ENCODE measurements at regions of chr6 and their contacts with region 1.

Region 1: GRCh38 chr6:144696610-144697368 is 411.7 kb downstream of the UTRN start:
- DNase-seq: no peak
- ATAC-seq: no peak
- H3K4me3 ChIP-seq: no peak overlapping the region
- H3K4me3 Mint-ChIP-seq: no peak overlapping the region
- H3K27ac ChIP-seq: no peak overlapping the region
- H3K27ac Mint-ChIP-seq: peak overlapping the region; percentile 1
- H3K4me1 ChIP-seq: peaks cover 11% of the 10 kb centered on the region
- H3K4me1 Mint-ChIP-seq: peaks cover 38% of the 10 kb centered on the region
- H3K27me3 ChIP-seq: no peaks in the 10 kb centered on the region
- H3K27me3 Mint-ChIP-seq: no peaks in the 10 kb centered on the region
- CTCF ChIP-seq: no peak

Region 2: DNA sequence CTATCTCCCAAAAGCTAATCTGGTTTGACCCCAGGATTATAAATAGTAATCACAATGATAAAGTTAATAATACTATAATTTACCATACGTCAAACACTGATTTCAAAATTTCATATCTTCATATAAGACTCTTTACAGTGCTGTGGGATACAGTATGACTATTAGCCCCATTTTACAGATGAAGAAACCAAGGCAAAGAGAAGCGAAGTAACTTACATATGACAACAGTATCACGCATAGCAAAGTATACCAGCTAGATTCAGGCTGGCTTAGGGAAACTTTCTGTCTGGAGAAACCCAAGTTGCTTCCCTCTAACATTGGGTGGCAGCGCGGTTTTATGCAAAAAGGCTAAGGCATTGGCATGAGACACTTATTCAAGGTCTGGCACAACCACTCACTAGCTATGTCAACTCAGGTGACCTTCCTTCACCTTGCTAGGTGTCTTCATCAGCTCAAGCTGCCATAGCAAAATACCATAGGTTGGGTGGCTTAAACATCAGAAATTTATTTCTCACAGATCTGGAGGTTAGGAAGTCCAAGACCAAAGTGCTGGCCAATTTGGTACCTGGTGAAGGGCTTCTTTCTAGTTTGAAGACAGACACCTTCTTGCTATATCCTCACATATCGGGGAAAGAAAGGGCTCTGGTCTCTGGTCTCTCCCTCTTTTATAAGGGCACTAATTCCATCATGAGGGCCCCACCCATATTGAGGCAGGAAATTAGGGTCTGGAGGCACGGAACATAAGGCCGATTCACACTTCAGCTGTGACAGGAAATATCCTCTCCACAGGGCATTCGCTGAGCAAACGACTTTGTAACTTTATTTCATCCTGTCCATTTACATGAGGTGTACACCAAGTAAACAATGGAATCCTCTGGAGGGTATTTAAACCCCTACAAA is 434.1 kb before region 1 on chr6:
- CTCF ChIA-PET with region 1: no interaction called
- POLR2A ChIA-PET with region 1: no interaction called
- intact Hi-C with region 1: no loop called
- DNase-seq: peak in 5 of 9 experiments; percentile 10 to 57 (median 40)
- ATAC-seq: no peak
- H3K4me3 ChIP-seq: no peak overlapping the region
- H3K4me3 Mint-ChIP-seq: no peak overlapping the region
- H3K27ac ChIP-seq: no peak overlapping the region
- H3K27ac Mint-ChIP-seq: no peak overlapping the region
- H3K4me1 ChIP-seq: no peaks in the 10 kb centered on the region
- H3K4me1 Mint-ChIP-seq: no peaks in the 10 kb centered on the region
- H3K27me3 ChIP-seq: no peaks in the 10 kb centered on the region
- H3K27me3 Mint-ChIP-seq: no peaks in the 10 kb centered on the region
- CTCF ChIP-seq: no peak

Region 3: DNA sequence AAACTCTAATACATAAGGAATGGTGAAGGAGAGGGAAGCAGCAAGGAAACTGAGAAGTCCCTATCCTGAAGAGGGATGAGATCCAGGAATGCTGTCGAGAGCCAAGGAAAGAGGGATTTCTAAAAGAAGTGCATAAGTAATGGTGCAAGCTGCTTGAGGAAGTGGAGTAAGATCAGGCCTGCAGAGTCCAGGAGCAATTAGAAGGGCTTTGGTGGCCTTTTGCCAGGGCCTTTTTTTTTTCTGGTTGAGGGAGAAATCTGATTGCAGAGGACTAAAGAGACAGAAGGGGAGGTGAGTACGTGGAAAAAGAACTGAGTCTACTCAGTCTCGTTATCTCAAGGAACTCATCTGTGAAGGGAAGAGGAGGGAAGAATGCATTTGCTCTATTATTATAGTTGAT is 15.5 kb before region 1 on chr6:
- CTCF ChIA-PET with region 1: no interaction called
- POLR2A ChIA-PET with region 1: no interaction called
- intact Hi-C with region 1: loop called in 1 of 2 experiments (anchors 2 kb)
- DNase-seq: no peak
- ATAC-seq: no peak
- H3K4me3 ChIP-seq: no peak overlapping the region
- H3K4me3 Mint-ChIP-seq: no peak overlapping the region
- H3K27ac ChIP-seq: no peak overlapping the region
- H3K27ac Mint-ChIP-seq: no peak overlapping the region
- H3K4me1 ChIP-seq: no peaks in the 10 kb centered on the region
- H3K4me1 Mint-ChIP-seq: peaks cover 6% of the 10 kb centered on the region
- H3K27me3 ChIP-seq: no peaks in the 10 kb centered on the region
- H3K27me3 Mint-ChIP-seq: no peaks in the 10 kb centered on the region
- CTCF ChIP-seq: no peak

Region 4: DNA sequence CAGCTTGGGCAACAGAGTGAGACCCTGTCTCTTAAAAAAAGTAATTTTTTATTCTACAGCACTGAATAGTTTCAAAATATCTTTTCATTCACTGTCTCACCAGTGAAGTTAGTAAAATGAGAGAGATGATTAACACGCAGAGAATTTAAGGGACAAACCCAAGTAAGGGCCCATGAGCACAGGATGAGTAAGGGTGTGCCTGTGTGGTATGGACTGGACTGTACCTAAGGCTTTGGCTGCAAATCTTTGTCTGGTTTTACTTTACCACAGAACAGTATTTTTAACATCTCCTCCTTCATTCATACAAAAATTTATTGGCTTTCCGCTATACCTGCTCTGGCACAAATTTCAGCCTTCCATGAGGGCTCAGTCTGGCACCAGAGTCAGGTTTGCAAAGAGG is 21.6 kb after region 1 on chr6:
- CTCF ChIA-PET with region 1: no interaction called
- POLR2A ChIA-PET with region 1: no interaction called
- intact Hi-C with region 1: no loop called
- DNase-seq: no peak
- ATAC-seq: no peak
- H3K4me3 ChIP-seq: no peak overlapping the region
- H3K4me3 Mint-ChIP-seq: no peak overlapping the region
- H3K27ac ChIP-seq: no peak overlapping the region
- H3K27ac Mint-ChIP-seq: no peak overlapping the region
- H3K4me1 ChIP-seq: no peaks in the 10 kb centered on the region
- H3K4me1 Mint-ChIP-seq: peaks cover 22% of the 10 kb centered on the region
- H3K27me3 ChIP-seq: no peaks in the 10 kb centered on the region
- H3K27me3 Mint-ChIP-seq: no peaks in the 10 kb centered on the region
- CTCF ChIP-seq: no peak

Region 5: DNA sequence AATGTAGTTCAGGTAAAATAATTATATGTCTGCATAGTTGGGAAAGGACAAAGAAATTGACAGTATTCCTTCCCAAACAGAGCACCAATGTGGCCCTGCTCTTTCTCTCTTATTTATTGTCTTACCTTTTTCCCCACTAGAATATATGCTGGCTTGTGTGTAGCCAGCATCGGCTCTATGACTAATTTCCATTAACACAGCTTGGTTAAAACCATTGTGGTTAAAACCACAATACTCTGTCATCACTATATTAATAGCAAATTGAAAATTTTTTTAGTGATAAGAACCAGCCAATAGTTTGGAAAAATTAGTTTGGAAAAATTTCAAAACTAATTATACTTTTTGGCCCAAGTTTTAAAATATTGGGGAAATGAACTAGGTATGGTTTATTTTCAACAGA is 123.5 kb after region 1 on chr6:
- CTCF ChIA-PET with region 1: no interaction called
- POLR2A ChIA-PET with region 1: no interaction called
- intact Hi-C with region 1: no loop called
- DNase-seq: peak in 1 of 9 experiments; percentile 6
- ATAC-seq: no peak
- H3K4me3 ChIP-seq: no peak overlapping the region
- H3K4me3 Mint-ChIP-seq: no peak overlapping the region
- H3K27ac ChIP-seq: no peak overlapping the region
- H3K27ac Mint-ChIP-seq: no peak overlapping the region
- H3K4me1 ChIP-seq: no peaks in the 10 kb centered on the region
- H3K4me1 Mint-ChIP-seq: peaks cover 4% of the 10 kb centered on the region
- H3K27me3 ChIP-seq: no peaks in the 10 kb centered on the region
- H3K27me3 Mint-ChIP-seq: no peaks in the 10 kb centered on the region
- CTCF ChIP-seq: no peak

Region 6: DNA sequence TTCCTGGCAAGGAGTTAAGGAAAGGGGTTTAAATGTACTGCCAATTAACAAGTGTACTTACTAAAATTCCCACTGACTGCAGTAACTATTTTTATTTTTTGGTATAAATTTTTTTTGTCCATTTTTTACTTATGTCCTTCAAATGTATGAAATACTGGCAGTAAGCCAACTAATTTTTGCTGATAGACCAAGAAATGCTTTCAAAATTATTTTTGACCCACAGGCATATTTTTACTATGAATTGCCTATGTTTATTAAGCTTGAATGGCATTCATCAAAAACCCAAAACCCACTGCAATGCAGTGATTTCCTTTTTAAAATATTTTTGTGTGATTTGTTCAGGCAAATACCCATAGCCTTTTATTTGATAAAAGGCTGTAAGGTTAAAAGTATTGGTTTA is 148.4 kb after region 1 on chr6:
- CTCF ChIA-PET with region 1: no interaction called
- POLR2A ChIA-PET with region 1: no interaction called
- intact Hi-C with region 1: no loop called
- DNase-seq: no peak
- ATAC-seq: no peak
- H3K4me3 ChIP-seq: no peak overlapping the region
- H3K4me3 Mint-ChIP-seq: no peak overlapping the region
- H3K27ac ChIP-seq: no peak overlapping the region
- H3K27ac Mint-ChIP-seq: peak overlapping the region; percentile 2
- H3K4me1 ChIP-seq: no peaks in the 10 kb centered on the region
- H3K4me1 Mint-ChIP-seq: no peaks in the 10 kb centered on the region
- H3K27me3 ChIP-seq: no peaks in the 10 kb centered on the region
- H3K27me3 Mint-ChIP-seq: no peaks in the 10 kb centered on the region
- CTCF ChIP-seq: no peak

Measured in CD8-positive, alpha-beta T cell (primary cell).